Heart right ventricle (tissue), 16 donors: ENCODE measurements at regions of chr19 and their contacts with region 1.

Region 1: DNA sequence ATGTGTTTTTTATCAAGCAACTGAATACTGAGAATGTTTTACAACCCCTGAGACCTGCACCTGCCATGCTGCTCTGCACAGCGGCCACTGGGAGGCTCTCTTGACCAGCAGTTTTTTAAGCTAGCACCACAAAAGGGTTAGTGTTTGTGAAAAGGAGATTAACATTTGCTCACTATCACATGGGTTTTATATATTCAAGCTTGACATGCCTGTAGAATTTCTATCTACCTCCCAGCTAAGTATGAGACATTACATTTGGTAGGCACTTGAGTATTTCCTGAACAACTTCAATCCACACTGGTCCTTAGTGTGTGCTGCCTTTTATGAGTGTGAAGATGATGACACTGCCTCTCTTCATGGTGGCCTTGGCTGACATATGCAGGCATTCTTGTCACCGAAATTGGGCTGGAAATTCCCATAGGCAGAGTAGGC is 1238.9 kb downstream of the UQCRFS1 start:
- DNase-seq: no peak
- ATAC-seq: peak in 1 of 8 donors; percentile 57
- H3K4me3 ChIP-seq: no peak overlapping the region
- H3K27ac ChIP-seq: no peak overlapping the region
- H3K4me1 ChIP-seq: no peaks in the 10 kb centered on the region
- H3K27me3 ChIP-seq: peaks cover 0 to 8% (median 0%) of the 10 kb centered on the region in 7 donors
- CTCF ChIP-seq: peak in 8 of 9 donors; percentile 36 to 70 (median 63)

Region 2: DNA sequence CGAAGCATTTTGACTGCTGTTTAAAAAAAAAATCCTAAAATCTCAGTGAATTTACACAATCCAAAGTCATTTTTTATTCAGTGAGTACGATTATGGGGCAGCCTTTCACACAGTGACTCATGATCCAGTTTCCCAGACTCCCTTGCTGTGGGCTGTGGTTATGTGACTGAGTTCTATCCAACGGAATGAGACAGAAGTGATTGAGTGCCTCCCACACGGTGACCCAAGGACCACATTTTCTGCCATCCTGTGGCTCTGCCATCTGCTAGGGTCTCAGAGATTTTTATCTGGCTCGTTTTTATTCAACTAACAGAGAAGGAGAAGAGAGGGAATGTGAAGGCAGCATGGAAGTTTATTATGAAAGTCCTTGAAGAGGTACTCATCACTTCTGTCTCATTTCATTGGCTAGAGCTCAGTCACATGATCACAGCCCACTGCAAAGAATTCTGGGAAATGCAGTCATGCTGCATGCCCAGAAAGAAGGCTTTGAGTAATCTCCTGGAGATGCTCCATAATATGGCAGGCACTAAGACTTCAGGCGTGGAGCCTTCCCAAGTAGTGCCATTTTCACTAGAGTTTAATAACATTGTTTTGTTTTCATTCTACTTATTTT is 239.5 kb after region 1 on chr19:
- intact Hi-C with region 1: loop called in 1 of 10 experiments (anchors 10 kb)
- DNase-seq: no peak
- ATAC-seq: no peak
- H3K4me3 ChIP-seq: no peak overlapping the region
- H3K27ac ChIP-seq: no peak overlapping the region
- H3K4me1 ChIP-seq: no peaks in the 10 kb centered on the region
- H3K27me3 ChIP-seq: peaks cover 0 to 7% (median 0%) of the 10 kb centered on the region in 7 donors
- CTCF ChIP-seq: no peak

Region 3: DNA sequence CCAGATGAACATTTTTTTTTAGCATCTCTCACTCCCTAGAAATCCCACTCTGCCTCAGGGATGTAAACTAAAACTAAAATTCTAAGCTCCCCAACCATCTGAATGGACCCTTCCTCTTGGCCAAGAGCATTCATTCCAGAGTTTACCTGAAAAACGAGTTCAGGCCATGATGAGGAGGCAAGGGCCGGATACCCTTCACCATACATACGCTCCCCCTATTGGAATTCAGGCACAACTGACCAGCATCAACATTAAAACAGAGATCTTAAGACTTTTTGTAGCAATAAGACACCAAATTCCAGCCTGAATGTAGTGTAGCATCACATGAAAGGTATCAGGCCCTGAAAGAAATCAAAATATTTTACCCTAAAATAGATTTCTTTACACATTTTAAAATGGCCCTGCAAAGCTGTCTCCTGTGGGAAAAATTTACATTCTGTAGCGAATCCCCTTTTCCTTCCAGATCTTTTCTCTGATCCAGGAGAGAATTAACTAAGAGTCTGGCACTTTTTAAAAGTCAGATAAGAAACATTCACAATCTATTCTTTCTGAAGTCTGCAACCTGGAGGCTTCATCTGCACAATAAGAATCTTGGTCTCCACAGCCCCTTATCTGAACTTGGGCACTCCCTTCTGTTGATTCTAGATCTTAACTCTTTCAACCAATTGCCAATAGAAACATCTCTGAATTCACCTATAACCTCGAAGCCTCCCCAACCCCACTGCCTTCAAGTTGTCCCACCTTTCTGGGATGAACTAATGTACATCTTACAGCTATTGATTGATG is 350.4 kb after region 1 on chr19:
- intact Hi-C with region 1: loop called in 9 of 10 experiments (anchors 1 to 5 kb)
- DNase-seq: no peak
- ATAC-seq: no peak
- H3K4me3 ChIP-seq: no peak overlapping the region
- H3K27ac ChIP-seq: no peak overlapping the region
- H3K4me1 ChIP-seq: no peaks in the 10 kb centered on the region
- H3K27me3 ChIP-seq: peaks cover 0 to 11% (median 4%) of the 10 kb centered on the region in 7 donors
- CTCF ChIP-seq: no peak

Region 4: DNA sequence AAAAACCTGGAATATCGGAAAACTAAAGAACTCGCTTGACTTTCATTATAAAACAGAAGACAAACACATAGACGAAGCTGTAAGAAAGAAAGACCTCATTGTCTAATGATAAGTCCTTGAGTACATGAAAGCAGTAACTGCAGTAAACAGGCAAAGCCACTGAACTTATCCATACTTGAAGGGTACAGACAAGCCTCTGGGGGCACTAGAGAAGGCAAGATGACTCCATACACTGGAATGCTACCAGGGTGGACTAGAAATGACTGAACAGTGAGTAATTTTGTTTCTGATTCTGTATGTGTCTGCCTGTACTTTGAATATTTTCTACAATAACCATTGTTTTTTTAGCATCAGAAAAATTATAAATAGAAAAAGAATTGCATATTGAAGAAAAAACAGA is 730.9 kb after region 1 on chr19:
- intact Hi-C with region 1: loop called in 6 of 10 experiments (anchors 5 to 10 kb)
- DNase-seq: no peak
- ATAC-seq: no peak
- H3K4me3 ChIP-seq: no peak overlapping the region
- H3K27ac ChIP-seq: no peak overlapping the region
- H3K4me1 ChIP-seq: no peaks in the 10 kb centered on the region
- H3K27me3 ChIP-seq: peaks cover 0 to 3% (median 0%) of the 10 kb centered on the region in 7 donors
- CTCF ChIP-seq: no peak

Region 5: GRCh38 chr19:28878862-28879566 is 904.9 kb after region 1 on chr19:
- intact Hi-C with region 1: loop called in 2 of 10 experiments (anchors 5 to 10 kb)
- DNase-seq: peak; percentile 61 to 64
- ATAC-seq: peak in 5 of 8 donors; percentile 15 to 38 (median 29)
- H3K4me3 ChIP-seq: no peak overlapping the region
- H3K27ac ChIP-seq: no peak overlapping the region
- H3K4me1 ChIP-seq: peaks cover 0 to 20% (median 6%) of the 10 kb centered on the region in 9 donors
- H3K27me3 ChIP-seq: peaks cover 0 to 4% (median 0%) of the 10 kb centered on the region in 7 donors
- CTCF ChIP-seq: peak; percentile 58 to 82 (median 71)